ENCODE measurements at regions of chr6 and their contacts with region 1.

Region 1: DNA sequence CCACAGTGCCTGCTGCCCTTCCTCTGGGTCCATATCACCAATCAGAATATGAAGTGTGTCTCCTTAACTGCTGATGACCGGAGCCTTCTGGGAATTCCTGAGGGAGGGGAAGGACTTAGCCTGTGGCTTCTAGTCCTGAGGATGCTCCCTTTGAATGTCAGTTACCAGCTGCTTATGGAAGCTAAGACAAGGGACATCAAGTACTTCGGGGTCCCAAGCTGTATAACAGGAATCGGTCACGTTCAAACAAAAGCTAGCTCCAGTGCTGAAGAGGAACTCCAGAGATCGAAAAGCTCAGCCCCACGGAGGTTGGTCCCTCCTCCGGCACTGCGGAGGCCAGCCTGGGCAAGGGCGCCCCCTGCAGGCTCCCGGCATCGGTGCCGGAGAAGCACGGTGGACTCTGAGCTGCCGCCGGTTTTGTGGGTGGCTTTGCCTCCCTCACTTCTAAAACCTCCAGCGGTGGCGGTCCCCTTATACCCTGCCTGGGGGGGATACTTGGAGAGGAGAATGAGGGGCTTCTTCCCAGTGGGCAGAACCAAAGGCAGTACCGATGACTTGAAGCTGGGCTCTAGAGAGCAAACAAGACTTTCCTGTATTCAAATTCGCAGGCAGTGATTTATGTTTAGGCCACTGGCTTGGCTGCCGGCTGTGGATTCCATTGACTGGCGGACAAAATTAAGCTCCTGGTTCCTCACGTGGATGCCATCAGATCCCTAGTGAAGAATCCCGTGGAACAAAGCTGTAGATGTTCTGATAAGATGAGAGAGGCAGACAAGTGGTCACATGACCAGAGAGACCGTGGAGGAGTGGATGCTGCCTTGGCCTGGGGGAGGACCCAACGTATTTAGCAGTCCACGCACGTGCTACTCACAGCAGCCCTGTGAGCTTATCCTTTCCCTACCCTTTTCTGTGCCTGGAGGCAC is 16.2 kb upstream of the UBR2 start:
- DNase-seq: peak; percentile 82 to 83 (median 82)
- H3K4me3 ChIP-seq: peak overlapping the region; percentile 33 to 79 (median 51)
- H3K4me3 Mint-ChIP-seq: peak overlapping the region; percentile 80 to 91
- H3K27ac ChIP-seq: peak overlapping the region; percentile 18 to 84
- H3K27ac Mint-ChIP-seq: peak overlapping the region; percentile 77 to 94 (median 88)
- H3K4me1 ChIP-seq: peaks cover 23 to 33% of the 10 kb centered on the region in 2 donors
- H3K4me1 Mint-ChIP-seq: peaks cover 35% of the 10 kb centered on the region
- H3K27me3 ChIP-seq: no peaks in the 10 kb centered on the region
- H3K27me3 Mint-ChIP-seq: peaks cover 0 to 7% (median 1%) of the 10 kb centered on the region in 3 donors
- CTCF ChIP-seq: peak; percentile 99

Region 2: DNA sequence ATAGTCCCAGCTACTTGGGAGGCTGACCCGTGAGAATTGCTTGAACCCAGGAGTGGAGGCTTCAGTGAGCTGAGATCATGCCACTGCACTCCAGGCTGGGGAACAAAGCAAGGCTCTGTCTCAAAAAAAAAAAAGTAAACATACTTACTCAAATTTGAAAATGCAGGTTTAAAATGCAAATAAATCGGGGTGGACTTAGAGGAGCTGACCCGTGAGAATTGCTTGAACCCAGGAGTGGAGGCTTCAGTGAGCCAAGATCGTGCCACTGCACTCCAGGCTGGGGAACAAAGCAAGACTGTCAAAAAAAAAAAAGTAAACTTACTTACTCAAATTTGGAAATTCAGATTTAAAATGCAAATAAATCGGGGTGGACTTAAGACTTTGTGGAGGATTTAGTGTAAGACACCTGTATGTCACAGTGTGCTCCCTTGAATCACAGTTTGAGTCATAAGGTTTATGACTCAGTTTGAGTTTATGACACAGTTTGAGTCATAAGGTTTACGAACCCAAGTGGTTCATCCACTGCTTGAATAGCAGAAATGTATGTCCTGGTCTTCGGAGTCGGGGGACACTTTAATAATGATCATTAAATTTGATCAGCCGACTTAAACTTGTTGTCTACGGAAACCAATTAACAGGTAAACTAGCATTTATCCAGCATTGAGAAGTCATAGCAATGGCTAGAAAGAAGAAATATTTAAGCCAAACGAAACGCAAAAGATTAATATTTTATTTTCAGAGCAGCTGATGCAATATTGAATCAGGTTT is 323.3 kb before region 1 on chr6:
- intact Hi-C with region 1: loop called (anchors 5 to 10 kb)
- DNase-seq: peak; percentile 10 to 74 (median 39)
- H3K4me3 ChIP-seq: no peak overlapping the region
- H3K4me3 Mint-ChIP-seq: no peak overlapping the region
- H3K27ac ChIP-seq: no peak overlapping the region
- H3K27ac Mint-ChIP-seq: peak overlapping the region in 1 of 7 donors; percentile 52
- H3K4me1 ChIP-seq: no peaks in the 10 kb centered on the region
- H3K4me1 Mint-ChIP-seq: no peaks in the 10 kb centered on the region
- H3K27me3 ChIP-seq: no peaks in the 10 kb centered on the region
- H3K27me3 Mint-ChIP-seq: no peaks in the 10 kb centered on the region
- CTCF ChIP-seq: no peak

Region 3: GRCh38 chr6:42269553-42269952 is 278.1 kb before region 1 on chr6:
- intact Hi-C with region 1: loop called (anchors 5 to 10 kb)
- DNase-seq: no peak
- H3K4me3 ChIP-seq: no peak overlapping the region
- H3K4me3 Mint-ChIP-seq: no peak overlapping the region
- H3K27ac ChIP-seq: no peak overlapping the region
- H3K27ac Mint-ChIP-seq: peak overlapping the region in 1 of 7 donors; percentile 54
- H3K4me1 ChIP-seq: no peaks in the 10 kb centered on the region
- H3K4me1 Mint-ChIP-seq: no peaks in the 10 kb centered on the region
- H3K27me3 ChIP-seq: no peaks in the 10 kb centered on the region
- H3K27me3 Mint-ChIP-seq: no peaks in the 10 kb centered on the region
- CTCF ChIP-seq: no peak

Region 4: DNA sequence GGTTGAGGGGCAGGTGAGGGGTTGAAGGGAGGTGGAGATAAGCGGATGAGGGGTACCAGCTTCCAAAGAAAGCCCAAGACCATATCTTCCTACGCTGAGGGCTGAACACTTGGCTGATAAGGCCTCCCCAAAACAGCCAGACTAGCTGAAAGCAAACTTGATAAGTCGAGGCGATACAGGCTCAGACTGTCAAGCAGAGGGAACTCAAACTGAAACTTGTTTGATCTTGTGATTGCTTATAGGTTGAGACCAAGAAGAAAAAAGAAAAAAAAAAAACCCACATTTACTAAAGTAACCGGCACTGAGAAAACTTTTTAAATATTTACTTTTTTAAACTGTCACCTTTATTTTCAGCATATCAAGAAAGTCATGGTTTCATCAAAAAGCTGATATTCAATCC is 169.5 kb before region 1 on chr6:
- intact Hi-C with region 1: loop called in 1 of 2 experiments (anchors 5 kb)
- DNase-seq: no peak
- H3K4me3 ChIP-seq: peak overlapping the region in 1 of 3 experiments; percentile 57
- H3K4me3 Mint-ChIP-seq: peak overlapping the region; percentile 61 to 68
- H3K27ac ChIP-seq: peak overlapping the region in 1 of 2 donors; percentile 67
- H3K27ac Mint-ChIP-seq: peak overlapping the region; percentile 49 to 85 (median 74)
- H3K4me1 ChIP-seq: peaks cover 76 to 77% of the 10 kb centered on the region in 2 donors
- H3K4me1 Mint-ChIP-seq: peaks cover 75% of the 10 kb centered on the region
- H3K27me3 ChIP-seq: no peaks in the 10 kb centered on the region
- H3K27me3 Mint-ChIP-seq: no peaks in the 10 kb centered on the region
- CTCF ChIP-seq: no peak